AG04449 (cell line): ENCODE measurements at regions of chr17 and their contacts with region 1.

Region 1: GRCh38 chr17:44314869-44315661 is 6.7 kb downstream of the RUNDC3A start:
- DNase-seq: no peak
- H3K4me3 ChIP-seq: peak overlapping the region; percentile 43
- CTCF ChIP-seq: no peak

Region 2: DNA sequence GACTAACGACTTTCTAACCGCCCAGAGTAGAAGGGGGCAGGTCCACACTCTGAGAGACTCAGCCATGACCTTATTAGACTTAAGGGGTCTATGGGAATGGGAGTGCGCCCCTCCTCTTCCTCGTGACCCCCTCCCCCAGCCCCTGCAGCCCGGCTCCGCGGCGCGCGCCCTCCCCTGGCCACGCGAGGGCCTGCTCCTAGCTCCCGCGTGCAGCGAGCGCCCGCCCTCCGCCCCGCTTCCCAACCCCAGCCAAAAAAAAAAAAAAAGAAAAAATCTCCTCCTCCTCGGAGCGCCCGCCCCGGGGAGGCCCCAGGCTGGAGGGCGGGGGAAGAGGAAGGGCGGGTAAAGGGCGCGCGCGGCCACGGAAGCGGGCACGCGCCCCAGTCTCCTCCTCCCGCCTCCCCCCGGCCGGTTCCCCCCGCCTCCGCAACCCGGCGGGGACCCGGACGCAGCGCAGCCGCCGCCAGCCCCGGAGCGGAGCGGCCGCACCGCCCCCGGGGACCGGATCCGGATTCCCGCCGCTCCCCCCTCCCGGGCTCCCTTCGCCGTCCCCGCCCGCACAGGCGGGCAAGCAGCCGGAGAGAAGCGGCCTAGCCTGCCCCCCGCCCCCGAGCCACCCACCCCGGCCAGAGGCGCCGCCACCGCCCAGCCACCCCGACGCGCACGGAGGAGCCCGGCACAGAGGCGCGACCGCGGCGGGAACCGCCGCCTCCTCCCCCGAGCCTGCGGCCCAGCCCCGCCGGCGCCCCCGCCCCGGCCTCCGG is 96.5 kb before region 1 on chr17:
- CTCF ChIA-PET with region 1: interaction called, 4 read pairs
- POLR2A ChIA-PET with region 1: interaction called, 18 read pairs
- DNase-seq: no peak
- H3K4me3 ChIP-seq: peak overlapping the region; percentile 82
- CTCF ChIP-seq: peak; percentile 70